ENCODE measurements at regions of chr3 and their contacts with region 1.

Region 1: DNA sequence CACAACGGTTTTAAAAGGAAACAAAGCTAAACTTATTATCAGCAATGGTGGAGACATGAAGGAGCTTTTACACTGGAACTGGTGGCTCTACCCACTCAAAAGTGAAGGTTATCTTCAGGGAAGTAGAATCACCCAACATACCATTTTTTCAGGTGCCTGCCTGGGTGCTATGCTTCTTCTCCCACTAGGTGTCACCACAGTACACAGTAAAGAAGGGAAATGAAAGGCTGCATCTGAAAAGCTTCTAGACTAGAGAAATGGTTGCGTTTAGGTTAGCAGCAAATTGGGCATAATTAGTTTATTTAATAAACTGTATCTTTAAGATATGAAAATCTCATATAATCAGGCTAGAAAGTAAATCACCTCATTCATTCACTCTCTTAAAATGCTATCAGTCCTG is 47.0 kb upstream of the SELENOK start:
- DNase-seq: peak; percentile 60
- H3K4me3 Mint-ChIP-seq: no peak overlapping the region
- H3K27ac Mint-ChIP-seq: no peak overlapping the region
- H3K4me1 Mint-ChIP-seq: peaks cover 5% of the 10 kb centered on the region
- H3K27me3 Mint-ChIP-seq: no peaks in the 10 kb centered on the region
- CTCF ChIP-seq: peak; percentile 86

Region 2: GRCh38 chr3:53921296-53921695 is 17.3 kb before region 1 on chr3:
- CTCF ChIA-PET with region 1: interaction called, 10 read pairs
- POLR2A ChIA-PET with region 1: no interaction called
- intact Hi-C with region 1: no loop called
- DNase-seq: peak; percentile 23
- H3K4me3 Mint-ChIP-seq: no peak overlapping the region
- H3K27ac Mint-ChIP-seq: no peak overlapping the region
- H3K4me1 Mint-ChIP-seq: no peaks in the 10 kb centered on the region
- H3K27me3 Mint-ChIP-seq: peaks cover 40% of the 10 kb centered on the region
- CTCF ChIP-seq: peak; percentile 16

Region 3: GRCh38 chr3:53969086-53969485 is 30.4 kb after region 1 on chr3:
- CTCF ChIA-PET with region 1: interaction called, 14 read pairs
- POLR2A ChIA-PET with region 1: no interaction called
- intact Hi-C with region 1: no loop called
- DNase-seq: no peak
- H3K4me3 Mint-ChIP-seq: no peak overlapping the region
- H3K27ac Mint-ChIP-seq: no peak overlapping the region
- H3K4me1 Mint-ChIP-seq: no peaks in the 10 kb centered on the region
- H3K27me3 Mint-ChIP-seq: no peaks in the 10 kb centered on the region
- CTCF ChIP-seq: no peak

Region 4: GRCh38 chr3:54008104-54008503 is 69.5 kb after region 1 on chr3:
- CTCF ChIA-PET with region 1: no interaction called
- POLR2A ChIA-PET with region 1: no interaction called
- intact Hi-C with region 1: no loop called
- DNase-seq: peak; percentile 4
- H3K4me3 Mint-ChIP-seq: no peak overlapping the region
- H3K27ac Mint-ChIP-seq: no peak overlapping the region
- H3K4me1 Mint-ChIP-seq: no peaks in the 10 kb centered on the region
- H3K27me3 Mint-ChIP-seq: no peaks in the 10 kb centered on the region
- CTCF ChIP-seq: no peak

Region 5: GRCh38 chr3:54358969-54359648 is 420.5 kb after region 1 on chr3:
- CTCF ChIA-PET with region 1: interaction called, 7 read pairs
- POLR2A ChIA-PET with region 1: no interaction called
- intact Hi-C with region 1: loop called (anchors 1 kb)
- DNase-seq: peak; percentile 84
- H3K4me3 Mint-ChIP-seq: no peak overlapping the region
- H3K27ac Mint-ChIP-seq: peak overlapping the region; percentile 51
- H3K4me1 Mint-ChIP-seq: peaks cover 35% of the 10 kb centered on the region
- H3K27me3 Mint-ChIP-seq: no peaks in the 10 kb centered on the region
- CTCF ChIP-seq: no peak

Region 6: GRCh38 chr3:54427941-54428871 is 489.6 kb after region 1 on chr3:
- CTCF ChIA-PET with region 1: interaction called, 24 read pairs
- POLR2A ChIA-PET with region 1: no interaction called
- intact Hi-C with region 1: loop called (anchors 5 kb)
- DNase-seq: peak; percentile 62
- H3K4me3 Mint-ChIP-seq: no peak overlapping the region
- H3K27ac Mint-ChIP-seq: no peak overlapping the region
- H3K4me1 Mint-ChIP-seq: no peaks in the 10 kb centered on the region
- H3K27me3 Mint-ChIP-seq: peaks cover 12% of the 10 kb centered on the region
- CTCF ChIP-seq: peak; percentile 78

Region 7: GRCh38 chr3:54853573-54854404 is 915.1 kb after region 1 on chr3:
- CTCF ChIA-PET with region 1: interaction called, 16 read pairs
- POLR2A ChIA-PET with region 1: no interaction called
- intact Hi-C with region 1: loop called (anchors 5 kb)
- DNase-seq: peak; percentile 61
- H3K4me3 Mint-ChIP-seq: no peak overlapping the region
- H3K27ac Mint-ChIP-seq: peak overlapping the region; percentile 75
- H3K4me1 Mint-ChIP-seq: peaks cover 23% of the 10 kb centered on the region
- H3K27me3 Mint-ChIP-seq: peaks cover 16% of the 10 kb centered on the region
- CTCF ChIP-seq: peak; percentile 79

Measured in MCF 10A (cell line).